ENCODE measurements at regions of chr19 and their contacts with region 1.

Region 1: DNA sequence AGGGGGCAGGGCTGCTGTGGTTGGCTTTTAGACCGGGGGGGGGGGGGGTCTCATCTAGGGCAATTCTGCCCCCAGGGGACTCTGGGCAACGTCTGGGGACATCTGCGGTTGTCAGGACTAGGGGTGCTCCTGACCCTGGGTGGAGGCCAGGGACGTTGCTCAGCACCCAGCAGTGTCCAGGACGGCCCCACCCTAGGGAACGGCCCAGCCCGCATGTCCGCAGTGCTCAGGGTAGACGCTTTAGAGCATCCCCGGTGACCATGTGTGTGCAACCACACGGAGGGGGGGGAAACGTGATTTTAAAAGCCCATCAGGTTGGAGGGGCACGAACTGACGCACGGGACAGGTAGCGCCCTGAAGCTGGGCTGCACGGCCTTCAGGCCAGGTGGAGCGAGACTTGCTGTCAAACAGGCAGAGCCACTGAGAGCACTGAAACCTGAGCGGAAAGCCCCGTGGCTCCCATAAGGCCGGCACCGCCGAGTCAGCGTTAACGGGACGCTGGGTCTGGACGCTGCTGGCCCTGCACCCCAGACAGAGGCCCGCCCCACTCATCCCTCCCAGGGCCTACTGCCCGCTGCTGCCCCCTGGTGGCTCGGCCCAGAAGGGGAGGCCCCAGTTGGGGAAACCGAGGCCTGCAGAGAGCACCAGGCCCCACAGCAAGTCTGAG is 8.3 kb downstream of the CACTIN start:
- DNase-seq: peak in 1 of 2 donors; percentile 86
- H3K4me3 ChIP-seq: peak overlapping the region in 1 of 2 donors; percentile 25
- H3K27ac ChIP-seq: no peak overlapping the region
- H3K4me1 ChIP-seq: peaks cover 0 to 6% of the 10 kb centered on the region in 2 donors
- H3K27me3 ChIP-seq: no peaks in the 10 kb centered on the region
- CTCF ChIP-seq: peak; percentile 98 to 99 (median 98)

Region 2: DNA sequence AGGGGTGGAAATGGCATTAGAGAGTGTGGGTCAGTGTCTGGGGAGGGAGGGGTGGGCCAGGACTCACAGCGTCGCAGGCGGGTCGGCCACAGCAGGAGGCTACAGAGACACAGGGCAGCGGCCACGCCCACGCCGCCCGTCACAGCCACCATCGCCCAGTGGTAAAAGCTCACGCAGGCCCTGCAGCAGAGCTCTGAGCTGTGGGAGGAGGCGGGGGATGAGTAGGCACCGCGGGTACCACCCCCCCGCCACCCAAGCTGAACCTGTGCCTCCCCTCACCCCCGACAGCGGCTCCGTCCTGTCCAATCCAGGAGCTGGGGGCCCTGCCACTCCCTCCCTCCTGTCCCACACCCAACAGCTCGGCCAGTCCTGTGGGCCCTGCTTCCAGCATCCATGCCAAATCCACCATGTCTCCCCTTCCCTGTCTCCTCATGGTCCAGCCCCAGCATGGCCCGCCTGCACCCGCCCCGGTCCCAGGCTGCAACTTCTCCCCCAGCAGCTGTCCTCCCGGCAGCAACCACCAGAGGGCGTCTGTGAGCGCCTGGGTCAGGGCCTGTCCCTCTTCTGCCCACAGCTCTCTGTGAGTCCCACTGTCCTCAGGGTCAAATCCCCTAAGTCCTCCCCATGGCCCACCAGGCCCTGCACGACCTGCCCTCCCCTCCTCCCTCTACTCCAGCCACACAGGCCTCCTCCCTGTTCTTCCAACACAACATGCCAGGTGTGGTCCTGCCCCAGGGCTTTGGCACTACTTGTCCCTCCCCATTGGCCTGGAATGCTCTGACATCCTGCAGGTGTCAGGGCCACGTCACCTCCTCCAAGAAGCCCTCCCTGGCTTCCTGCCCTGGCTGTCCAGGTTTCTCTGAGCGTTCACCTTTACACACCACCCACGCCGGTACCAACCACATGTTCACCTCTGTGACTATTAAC is 73.3 kb before region 1 on chr19:
- intact Hi-C with region 1: loop called (anchors 1 kb)
- DNase-seq: peak in 1 of 2 donors; percentile 82
- H3K4me3 ChIP-seq: no peak overlapping the region
- H3K27ac ChIP-seq: no peak overlapping the region
- H3K4me1 ChIP-seq: peaks cover 3 to 8% of the 10 kb centered on the region in 2 donors
- H3K27me3 ChIP-seq: no peaks in the 10 kb centered on the region
- CTCF ChIP-seq: peak; percentile 93 to 96 (median 93)

Region 3: DNA sequence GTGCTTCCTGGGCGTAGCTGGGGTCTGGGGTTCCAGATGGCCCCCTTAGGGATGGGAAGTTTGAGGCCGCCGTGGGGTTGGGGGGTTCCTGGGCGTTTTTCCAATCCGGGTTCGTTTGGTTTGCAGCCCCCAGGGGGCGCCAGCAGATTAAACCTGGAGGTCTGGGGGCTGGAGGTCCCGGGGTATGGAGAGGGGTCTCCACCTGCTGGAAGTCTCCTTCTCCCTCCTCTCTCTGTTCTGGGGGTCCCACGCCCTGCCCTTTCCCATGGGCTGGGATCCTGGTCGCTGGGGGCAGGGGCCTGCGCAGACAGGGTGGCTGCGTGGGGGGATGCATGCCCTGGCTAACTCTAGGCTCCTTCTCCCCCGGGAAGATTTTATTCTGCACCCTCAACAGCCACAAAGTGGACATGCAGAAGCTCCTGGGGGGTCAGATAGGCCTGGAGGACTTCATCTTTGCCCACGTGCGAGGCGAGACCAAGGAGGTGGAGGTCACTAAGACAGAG is 32.1 kb before region 1 on chr19:
- intact Hi-C with region 1: loop called (anchors 1 kb)
- DNase-seq: no peak
- H3K4me3 ChIP-seq: peak overlapping the region; percentile 52 to 62
- H3K27ac ChIP-seq: no peak overlapping the region
- H3K4me1 ChIP-seq: peaks cover 7 to 11% of the 10 kb centered on the region in 2 donors
- H3K27me3 ChIP-seq: no peaks in the 10 kb centered on the region
- CTCF ChIP-seq: peak; percentile 48 to 79 (median 69)

Region 4: GRCh38 chr19:3632739-3633558 is 14.7 kb after region 1 on chr19:
- intact Hi-C with region 1: no loop called
- DNase-seq: no peak
- H3K4me3 ChIP-seq: no peak overlapping the region
- H3K27ac ChIP-seq: no peak overlapping the region
- H3K4me1 ChIP-seq: no peaks in the 10 kb centered on the region
- H3K27me3 ChIP-seq: no peaks in the 10 kb centered on the region
- CTCF ChIP-seq: no peak

Region 5: DNA sequence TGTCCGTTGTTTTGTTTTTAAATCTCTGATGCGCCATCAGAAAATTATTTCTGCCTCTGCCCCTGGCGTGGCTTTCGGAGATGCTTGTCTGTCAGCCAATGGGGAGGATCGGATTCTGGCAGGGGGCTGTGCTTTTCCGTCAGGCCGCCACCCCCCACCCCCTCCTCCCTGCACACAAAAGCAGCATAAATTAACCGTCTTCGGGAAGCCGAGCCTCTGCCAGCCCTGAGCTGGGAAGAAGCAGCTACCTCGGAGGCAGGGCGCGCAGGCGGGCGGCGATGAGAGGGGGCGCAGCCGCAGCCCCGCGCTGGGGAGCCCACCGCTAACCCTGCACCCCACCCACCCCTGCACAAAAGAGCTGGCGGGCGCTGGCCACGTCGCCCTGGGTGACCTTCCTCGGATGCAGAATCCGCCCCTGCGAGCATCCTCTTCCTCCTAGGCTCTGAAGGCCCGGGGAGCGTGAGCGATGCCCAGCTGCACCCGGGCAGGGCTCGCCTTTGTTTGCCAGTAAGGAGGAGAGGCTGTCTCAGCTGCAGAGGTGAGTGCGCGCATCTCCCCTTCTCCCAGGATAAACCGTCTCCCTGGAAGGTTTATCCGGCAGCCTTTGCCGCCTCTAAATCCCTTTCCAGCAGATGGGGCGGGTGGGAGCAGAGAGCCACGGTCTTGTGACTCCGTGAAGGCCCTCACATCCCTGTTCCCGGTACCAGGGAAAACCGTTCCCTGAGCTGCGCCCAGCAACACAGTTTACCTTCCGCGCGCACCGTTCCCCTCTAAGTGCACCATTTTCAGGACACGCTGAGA is 262.4 kb after region 1 on chr19 and contains the start of gene ATCAY:
- intact Hi-C with region 1: no loop called
- DNase-seq: no peak
- H3K4me3 ChIP-seq: no peak within 1 kb of the TSS
- H3K27ac ChIP-seq: no peak within 1 kb of the TSS
- H3K4me1 ChIP-seq: no peaks in the 10 kb centered on the region
- H3K27me3 ChIP-seq: peaks cover 12% of the 10 kb centered on the region
- CTCF ChIP-seq: no peak
- total RNA-seq, gene ATCAY: not detected